ENCODE measurements at regions of chr7 and their contacts with region 1.

Region 1: GRCh38 chr7:114865564-114865963 is 56.3 kb upstream of the MDFIC start:
- DNase-seq: peak; percentile 11 to 24
- ATAC-seq: peak in 1 of 2 donors; percentile 49
- H3K4me3 ChIP-seq: no peak overlapping the region
- H3K27ac ChIP-seq: no peak overlapping the region
- H3K4me1 ChIP-seq: no peaks in the 10 kb centered on the region
- H3K27me3 ChIP-seq: no peaks in the 10 kb centered on the region
- CTCF ChIP-seq: peak in 4 of 5 experiments; percentile 42 to 76 (median 63)
- POLR2A ChIP-seq: no peak

Region 2: DNA sequence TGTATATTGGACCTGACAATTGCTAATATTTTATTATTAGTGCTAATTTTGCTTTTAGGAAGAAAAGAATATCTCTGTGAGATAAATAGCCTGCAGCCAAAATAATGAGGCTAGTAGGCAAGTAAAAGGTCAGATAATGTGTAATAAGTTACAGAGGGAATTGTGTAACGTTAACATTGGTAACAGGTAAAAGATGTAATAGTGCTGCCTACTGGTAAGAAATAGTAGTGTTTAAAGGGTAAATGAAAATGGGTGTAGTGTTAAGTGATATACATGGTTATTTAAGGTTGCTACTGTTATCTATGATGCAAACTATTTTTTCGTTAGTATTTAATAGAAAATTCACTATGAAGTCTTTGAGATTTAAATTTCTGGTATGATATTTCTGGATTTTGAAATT is 460.1 kb before region 1 on chr7:
- in situ Hi-C with region 1: no loop called
- intact Hi-C with region 1: no loop called
- DNase-seq: no peak
- ATAC-seq: peak; percentile 50 to 90
- H3K4me3 ChIP-seq: no peak overlapping the region
- H3K27ac ChIP-seq: no peak overlapping the region
- H3K4me1 ChIP-seq: no peaks in the 10 kb centered on the region
- H3K27me3 ChIP-seq: no peaks in the 10 kb centered on the region
- CTCF ChIP-seq: peak; percentile 25 to 83 (median 44)
- POLR2A ChIP-seq: no peak

Region 3: DNA sequence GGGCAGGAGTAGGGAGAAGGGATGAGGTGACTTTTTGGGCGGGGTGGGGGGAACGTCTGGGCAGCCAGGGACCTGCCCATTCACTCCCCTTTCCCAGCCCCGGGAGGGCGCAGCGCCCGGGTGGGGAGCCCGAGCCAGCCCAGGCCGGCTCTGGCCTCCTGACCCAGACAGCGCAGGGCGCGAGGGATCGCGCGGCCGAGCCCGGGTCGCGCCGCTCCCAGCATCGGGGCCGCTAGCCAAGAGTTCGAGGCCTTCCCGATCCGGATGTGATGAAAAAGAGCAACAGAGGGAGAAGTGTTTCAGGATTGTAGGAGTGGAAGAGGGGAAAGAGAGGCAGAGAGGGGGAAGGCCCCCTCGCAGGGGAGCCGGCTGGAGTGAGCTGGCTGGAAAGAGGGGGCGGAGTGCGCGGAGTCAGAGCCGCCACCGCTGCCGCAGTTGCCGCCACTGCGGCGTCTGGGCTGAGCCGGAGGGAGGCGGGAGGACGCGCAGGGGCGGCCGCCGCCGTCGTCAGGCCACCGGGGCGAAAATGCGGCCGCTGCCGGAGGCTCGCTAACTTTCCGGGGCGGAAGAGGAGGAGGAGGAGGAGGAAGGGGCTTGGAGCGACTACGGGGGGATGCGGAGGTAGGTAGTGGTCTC is 56.6 kb after region 1 on chr7 and contains the start of gene MDFIC:
- in situ Hi-C with region 1: no loop called
- intact Hi-C with region 1: no loop called
- DNase-seq: peak; percentile 3 to 29
- ATAC-seq: peak; percentile 66 to 68
- H3K4me3 ChIP-seq: peak within 1 kb of the TSS; percentile 76 to 96 (median 86)
- H3K27ac ChIP-seq: peak within 1 kb of the TSS; percentile 77 to 89 (median 85)
- H3K4me1 ChIP-seq: peaks cover 8 to 12% of the 10 kb centered on the region in 2 donors
- H3K27me3 ChIP-seq: no peaks in the 10 kb centered on the region
- CTCF ChIP-seq: no peak
- POLR2A ChIP-seq: peak; percentile 34
- total RNA-seq, gene MDFIC: 6.3 to 11.6 (median 10.6) TPM

Region 4: GRCh38 chr7:115217373-115217772 is 351.8 kb after region 1 on chr7:
- in situ Hi-C with region 1: loop called in 2 of 4 experiments (anchors 10 to 25 kb)
- intact Hi-C with region 1: loop called (anchors 10 kb)
- DNase-seq: no peak
- ATAC-seq: no peak
- H3K4me3 ChIP-seq: no peak overlapping the region
- H3K27ac ChIP-seq: no peak overlapping the region
- H3K4me1 ChIP-seq: no peaks in the 10 kb centered on the region
- H3K27me3 ChIP-seq: no peaks in the 10 kb centered on the region
- CTCF ChIP-seq: peak in 1 of 5 experiments; percentile 17
- POLR2A ChIP-seq: no peak

Region 5: GRCh38 chr7:115229401-115230105 is 364.0 kb after region 1 on chr7:
- in situ Hi-C with region 1: loop called in 1 of 4 experiments (anchors 25 kb)
- intact Hi-C with region 1: loop called (anchors 10 kb)
- DNase-seq: no peak
- ATAC-seq: no peak
- H3K4me3 ChIP-seq: no peak overlapping the region
- H3K27ac ChIP-seq: no peak overlapping the region
- H3K4me1 ChIP-seq: peaks cover 3 to 6% of the 10 kb centered on the region in 2 donors
- H3K27me3 ChIP-seq: no peaks in the 10 kb centered on the region
- CTCF ChIP-seq: no peak
- POLR2A ChIP-seq: no peak

Measured in gastrocnemius medialis (tissue), 4 donors.